Right cardiac atrium (tissue), 5 donors: ENCODE measurements at regions of chr6 and their contacts with region 1.

Region 1: GRCh38 chr6:32885698-32886286 is 31.8 kb downstream of the PSMB9 start:
- DNase-seq: no peak
- ATAC-seq: peak in 1 of 2 donors; percentile 40
- H3K4me3 ChIP-seq: no peak overlapping the region
- H3K27ac ChIP-seq: no peak overlapping the region
- H3K4me1 ChIP-seq: no peaks in the 10 kb centered on the region
- H3K27me3 ChIP-seq: no peaks in the 10 kb centered on the region

Region 2: GRCh38 chr6:32984605-32985389 is 99.0 kb after region 1 on chr6:
- intact Hi-C with region 1: loop called (anchors 2 to 10 kb)
- DNase-seq: peak; percentile 90 to 97 (median 92)
- ATAC-seq: peak; percentile 82
- H3K4me3 ChIP-seq: no peak overlapping the region
- H3K27ac ChIP-seq: no peak overlapping the region
- H3K4me1 ChIP-seq: no peaks in the 10 kb centered on the region
- H3K27me3 ChIP-seq: no peaks in the 10 kb centered on the region